ENCODE measurements at regions of chr10 and their contacts with region 1.

Region 1: GRCh38 chr10:7876541-7877127 is 58.3 kb downstream of the TAF3 start:
- DNase-seq: no peak
- H3K4me3 ChIP-seq: no peak overlapping the region
- H3K27ac ChIP-seq: no peak overlapping the region
- H3K4me1 ChIP-seq: no peaks in the 10 kb centered on the region
- H3K27me3 ChIP-seq: no peaks in the 10 kb centered on the region
- CTCF ChIP-seq: no peak
- POLR2A ChIP-seq: no peak

Region 2: GRCh38 chr10:8174772-8175171 is 298.1 kb after region 1 on chr10:
- intact Hi-C with region 1: no loop called
- DNase-seq: no peak
- H3K4me3 ChIP-seq: no peak overlapping the region
- H3K27ac ChIP-seq: no peak overlapping the region
- H3K4me1 ChIP-seq: no peaks in the 10 kb centered on the region
- H3K27me3 ChIP-seq: no peaks in the 10 kb centered on the region
- CTCF ChIP-seq: no peak
- POLR2A ChIP-seq: no peak

Region 3: DNA sequence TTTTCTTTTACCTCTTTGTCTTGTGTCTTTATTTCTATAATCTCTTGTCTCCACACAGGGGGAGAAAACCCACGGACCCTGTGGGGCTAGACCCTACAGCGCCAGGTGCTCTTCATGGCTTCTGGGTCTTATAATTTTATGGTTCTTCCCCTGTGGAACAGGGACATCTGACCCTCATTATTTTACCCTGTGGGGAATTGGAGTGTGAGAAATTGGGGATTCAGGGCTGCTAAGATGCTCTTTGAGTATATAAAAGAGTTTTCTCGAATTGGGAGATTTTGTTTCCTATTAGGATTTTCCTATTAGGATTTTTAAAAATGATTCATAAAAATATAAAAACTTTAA is 1526.2 kb after region 1 on chr10:
- intact Hi-C with region 1: loop called (anchors 5 kb)
- DNase-seq: no peak
- H3K4me3 ChIP-seq: no peak overlapping the region
- H3K27ac ChIP-seq: no peak overlapping the region
- H3K4me1 ChIP-seq: no peaks in the 10 kb centered on the region
- H3K27me3 ChIP-seq: no peaks in the 10 kb centered on the region
- CTCF ChIP-seq: no peak
- POLR2A ChIP-seq: no peak